Activated T-helper 1 cell treated with anti-CD3 and anti-CD28 coated beads, Interleukin-12 subunit alpha, Interleukin-12 subunit beta, Interleukin-2, Interleukin-4 antibody, amounts not matched to agents 30 ng/mL and 10 ng/mL and 1 ng/mL, durations not matched to agents 14 hours and 24 hours and 36 hours (primary cell): ENCODE measurements at regions of chr15 and their contacts with region 1.

Region 1: DNA sequence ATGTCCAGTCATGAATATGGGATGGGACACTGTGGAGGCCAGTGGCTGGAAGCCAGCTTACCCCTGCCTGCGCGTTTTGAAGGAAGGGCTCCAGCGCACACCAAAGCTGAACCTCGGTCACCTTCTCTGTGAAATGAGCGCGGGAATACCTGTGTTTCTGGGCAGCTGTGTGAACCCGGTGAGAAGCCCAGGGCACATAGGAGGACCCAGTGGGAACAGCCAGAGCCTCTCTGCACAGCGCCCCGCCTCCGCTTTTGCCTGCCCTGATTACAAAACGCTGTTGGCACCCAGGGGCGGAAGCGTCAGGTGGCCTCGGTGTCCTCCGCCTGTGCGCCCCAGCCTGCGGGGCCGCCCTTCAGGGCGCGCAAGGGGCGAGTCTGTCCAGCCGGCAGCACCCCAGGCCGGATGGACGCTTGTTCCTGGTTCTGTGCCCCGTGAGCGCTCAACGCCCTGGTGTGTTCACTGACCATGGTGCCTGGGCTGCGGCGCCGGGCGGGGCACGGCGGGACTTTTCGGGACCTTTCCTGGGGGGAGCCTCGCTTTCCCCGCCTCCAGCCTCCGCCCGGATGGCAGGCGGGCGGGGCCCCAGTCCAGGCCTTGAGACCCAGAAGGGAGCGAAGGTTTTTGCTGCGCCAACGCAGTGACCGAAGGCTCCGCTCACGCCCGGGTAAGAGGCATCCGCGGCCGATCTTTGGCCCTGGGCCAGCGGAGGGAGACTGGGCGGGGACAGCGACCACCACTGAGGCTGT is at the start of gene SQOR:
- DNase-seq: peak; percentile 67
- H3K4me3 Mint-ChIP-seq: peak within 1 kb of the TSS; percentile 99
- H3K27ac Mint-ChIP-seq: peak within 1 kb of the TSS; percentile 94
- H3K4me1 Mint-ChIP-seq: peaks cover 50% of the 10 kb centered on the region
- H3K27me3 Mint-ChIP-seq: peaks cover 16% of the 10 kb centered on the region
- total RNA-seq, gene SQOR: 96.0 and 100 TPM in 2 replicates

Region 2: DNA sequence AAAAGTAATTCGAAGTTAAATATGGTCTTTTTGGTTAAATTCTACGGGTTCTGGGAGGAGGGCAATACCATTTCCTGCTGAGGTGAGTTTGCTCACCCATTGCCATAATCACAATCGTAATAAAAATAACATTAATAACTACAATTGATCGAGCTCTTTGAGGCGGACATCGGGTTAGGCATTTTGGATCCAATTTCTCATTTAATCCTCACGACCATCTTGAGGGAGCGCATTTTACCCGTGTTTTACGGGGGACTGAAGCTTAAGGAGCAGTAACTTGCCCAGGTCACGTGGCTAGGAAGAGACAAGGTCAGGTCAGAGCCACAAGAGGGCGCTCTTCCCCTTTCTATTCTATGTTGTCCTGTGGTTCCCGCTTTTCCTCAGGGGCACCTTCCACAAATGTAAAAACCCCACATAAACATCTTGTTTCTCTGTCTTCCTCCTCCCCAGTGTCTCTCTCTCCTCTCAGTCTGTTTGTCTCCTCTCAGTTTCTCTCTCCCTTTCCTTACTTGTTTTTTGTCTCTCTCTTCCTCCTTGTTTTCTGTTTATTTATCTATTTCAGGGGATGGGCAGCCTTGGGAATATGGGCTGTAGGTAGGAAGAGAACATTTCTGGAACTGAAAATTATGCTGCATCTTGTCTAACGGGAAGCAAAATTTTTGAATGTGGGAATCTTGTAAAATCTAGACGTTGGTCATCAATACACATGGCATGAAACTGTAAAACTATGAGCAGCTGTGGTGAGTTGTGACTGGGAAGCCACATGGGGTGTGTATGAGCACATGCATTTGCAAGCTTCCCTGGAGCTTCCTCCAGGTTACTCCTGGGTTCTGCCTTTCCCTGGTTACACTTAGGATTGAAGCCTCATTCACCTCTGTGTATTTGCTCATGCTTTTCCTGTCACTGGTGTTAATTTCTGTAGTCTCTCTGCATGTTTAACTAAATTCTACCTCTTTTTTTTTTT is 71.2 kb after region 1 on chr15:
- intact Hi-C with region 1: loop called (anchors 1 kb)
- DNase-seq: peak; percentile 51
- H3K4me3 Mint-ChIP-seq: peak overlapping the region; percentile 86
- H3K27ac Mint-ChIP-seq: peak overlapping the region; percentile 9
- H3K4me1 Mint-ChIP-seq: peaks cover 16% of the 10 kb centered on the region
- H3K27me3 Mint-ChIP-seq: peaks cover 21% of the 10 kb centered on the region

Region 3: DNA sequence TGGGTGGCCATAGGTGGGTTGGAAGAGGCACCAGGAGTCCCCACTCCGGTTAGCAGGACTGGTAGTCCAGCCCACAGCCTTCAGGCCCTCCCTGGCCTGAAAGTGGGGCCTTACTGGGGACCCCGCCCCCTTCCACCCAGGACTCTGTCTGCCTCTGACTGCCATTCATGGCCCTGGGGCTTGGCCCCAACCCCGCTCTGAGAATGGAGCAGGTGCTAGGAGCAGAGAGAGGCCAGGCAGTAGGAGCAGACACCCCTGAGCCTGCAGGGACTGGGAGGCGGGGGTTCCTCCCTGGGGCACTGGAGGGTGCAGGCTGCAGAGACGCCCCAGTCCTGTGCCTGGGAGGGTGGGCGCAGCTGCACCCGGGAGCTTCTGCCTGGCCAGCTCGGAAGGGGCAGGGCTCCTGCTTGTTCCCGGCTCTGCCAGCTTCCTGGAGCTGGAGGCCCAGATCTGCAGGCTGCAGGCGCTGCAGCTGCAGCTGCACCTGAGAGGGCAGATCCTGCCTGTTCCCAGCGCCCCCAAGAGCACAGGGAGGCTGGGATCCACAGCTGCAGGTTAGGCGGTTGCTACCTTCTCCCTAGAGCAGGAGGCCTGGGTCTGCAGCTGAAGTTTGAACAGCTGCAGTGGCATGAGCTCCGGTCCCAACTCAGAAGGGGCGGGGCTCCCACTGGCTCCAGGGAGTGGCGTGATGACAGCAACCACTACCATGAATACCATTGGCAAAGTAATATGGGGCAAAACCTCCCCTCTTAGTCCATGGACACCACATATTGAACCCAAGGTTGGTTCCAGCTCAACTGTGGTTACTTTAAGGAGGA is 194.9 kb after region 1 on chr15:
- intact Hi-C with region 1: no loop called
- DNase-seq: no peak
- H3K4me3 Mint-ChIP-seq: no peak overlapping the region
- H3K27ac Mint-ChIP-seq: no peak overlapping the region
- H3K4me1 Mint-ChIP-seq: no peaks in the 10 kb centered on the region
- H3K27me3 Mint-ChIP-seq: no peaks in the 10 kb centered on the region